Pancreas (tissue), 10 donors: ENCODE measurements at regions of chr4 and their contacts with region 1.

Region 1: GRCh38 chr4:138049350-138049749 is 192.8 kb downstream of the SLC7A11 start:
- DNase-seq: no peak
- ATAC-seq: no peak
- H3K4me3 ChIP-seq: no peak overlapping the region
- H3K27ac ChIP-seq: no peak overlapping the region
- H3K4me1 ChIP-seq: no peaks in the 10 kb centered on the region
- H3K27me3 ChIP-seq: no peaks in the 10 kb centered on the region
- CTCF ChIP-seq: no peak

Region 2: GRCh38 chr4:138669479-138670315 is 620.3 kb after region 1 on chr4:
- intact Hi-C with region 1: loop called in 1 of 3 experiments (anchors 10 kb)
- DNase-seq: no peak
- ATAC-seq: no peak
- H3K4me3 ChIP-seq: no peak overlapping the region
- H3K27ac ChIP-seq: no peak overlapping the region
- H3K4me1 ChIP-seq: no peaks in the 10 kb centered on the region
- H3K27me3 ChIP-seq: no peaks in the 10 kb centered on the region
- CTCF ChIP-seq: no peak